ENCODE measurements at regions of chr4 and their contacts with region 1.

Region 1: GRCh38 chr4:38759113-38759789 is 23.5 kb downstream of the TLR10 start:
- DNase-seq: peak; percentile 57 to 79 (median 70)
- H3K4me3 ChIP-seq: no peak overlapping the region
- H3K27ac ChIP-seq: peak overlapping the region in 1 of 2 donors; percentile 50
- H3K4me1 ChIP-seq: no peaks in the 10 kb centered on the region
- H3K27me3 ChIP-seq: no peaks in the 10 kb centered on the region
- CTCF ChIP-seq: peak in 2 of 3 donors; percentile 73 to 78
- EP300 ChIP-seq: no peak
- POLR2A ChIP-seq: no peak

Region 2: GRCh38 chr4:38856524-38857337 is 97.5 kb after region 1 on chr4 and contains the start of gene TLR6:
- intact Hi-C with region 1: loop called in 1 of 4 experiments (anchors 5 kb)
- DNase-seq: peak in 2 of 5 donors; percentile 42 to 58
- H3K4me3 ChIP-seq: peak within 1 kb of the TSS; percentile 19
- H3K27ac ChIP-seq: peak within 1 kb of the TSS in 1 of 2 donors; percentile 19
- H3K4me1 ChIP-seq: no peaks in the 10 kb centered on the region
- H3K27me3 ChIP-seq: no peaks in the 10 kb centered on the region
- CTCF ChIP-seq: peak; percentile 53 to 60 (median 60)
- EP300 ChIP-seq: no peak
- POLR2A ChIP-seq: no peak
- total RNA-seq, gene TLR6: 1.9 to 5.0 (median 3.2) TPM

Region 3: GRCh38 chr4:39103291-39103690 is 344.0 kb after region 1 on chr4:
- intact Hi-C with region 1: no loop called
- DNase-seq: no peak
- H3K4me3 ChIP-seq: no peak overlapping the region
- H3K27ac ChIP-seq: no peak overlapping the region
- H3K4me1 ChIP-seq: no peaks in the 10 kb centered on the region
- H3K27me3 ChIP-seq: no peaks in the 10 kb centered on the region
- CTCF ChIP-seq: no peak
- EP300 ChIP-seq: no peak
- POLR2A ChIP-seq: no peak

Region 4: DNA sequence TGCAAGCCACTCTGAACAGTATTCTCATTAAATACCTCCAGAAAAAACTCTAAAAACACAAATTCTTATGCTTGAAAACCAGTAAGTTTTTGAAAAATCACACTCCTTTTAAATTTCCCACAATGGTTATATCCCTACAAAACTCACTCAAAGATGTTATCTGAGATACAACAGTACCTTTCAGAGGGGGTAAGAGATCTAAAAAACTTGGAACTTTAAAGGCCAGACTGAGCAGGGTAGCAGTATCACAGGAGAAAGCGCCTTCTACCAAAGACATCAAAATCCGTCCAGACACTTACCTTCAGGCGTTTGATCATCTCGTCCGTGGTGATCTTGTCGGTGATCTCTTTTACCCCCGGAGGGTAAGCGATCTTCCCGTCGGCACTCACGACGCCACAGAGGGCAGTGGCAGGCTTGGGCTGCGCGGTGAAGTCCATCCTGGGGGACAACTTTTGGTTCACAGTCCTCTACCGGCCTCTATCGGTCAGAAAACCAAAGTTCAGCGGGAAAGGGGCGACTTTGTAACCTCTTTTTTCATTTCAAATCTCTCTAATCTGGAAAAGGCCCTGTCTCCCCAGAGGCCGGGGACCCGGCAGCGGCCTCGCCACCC is 1217.0 kb after region 1 on chr4:
- intact Hi-C with region 1: no loop called
- DNase-seq: peak; percentile 68 to 81 (median 76)
- H3K4me3 ChIP-seq: peak overlapping the region; percentile 95
- H3K27ac ChIP-seq: peak overlapping the region; percentile 90 to 91
- H3K4me1 ChIP-seq: peaks cover 3% of the 10 kb centered on the region
- H3K27me3 ChIP-seq: no peaks in the 10 kb centered on the region
- CTCF ChIP-seq: peak; percentile 69 to 84 (median 82)
- EP300 ChIP-seq: no peak
- POLR2A ChIP-seq: no peak

Measured in ovary (tissue), 10 donors.